ENCODE measurements at regions of chr5 and their contacts with region 1.

Region 1: GRCh38 chr5:180784497-180785097 is 18.0 kb downstream of the MGAT1 start:
- DNase-seq: peak; percentile 85
- H3K4me3 Mint-ChIP-seq: no peak overlapping the region
- H3K27ac Mint-ChIP-seq: no peak overlapping the region
- H3K4me1 Mint-ChIP-seq: peaks cover 16% of the 10 kb centered on the region
- H3K27me3 Mint-ChIP-seq: no peaks in the 10 kb centered on the region
- CTCF ChIP-seq: peak; percentile 68

Region 2: DNA sequence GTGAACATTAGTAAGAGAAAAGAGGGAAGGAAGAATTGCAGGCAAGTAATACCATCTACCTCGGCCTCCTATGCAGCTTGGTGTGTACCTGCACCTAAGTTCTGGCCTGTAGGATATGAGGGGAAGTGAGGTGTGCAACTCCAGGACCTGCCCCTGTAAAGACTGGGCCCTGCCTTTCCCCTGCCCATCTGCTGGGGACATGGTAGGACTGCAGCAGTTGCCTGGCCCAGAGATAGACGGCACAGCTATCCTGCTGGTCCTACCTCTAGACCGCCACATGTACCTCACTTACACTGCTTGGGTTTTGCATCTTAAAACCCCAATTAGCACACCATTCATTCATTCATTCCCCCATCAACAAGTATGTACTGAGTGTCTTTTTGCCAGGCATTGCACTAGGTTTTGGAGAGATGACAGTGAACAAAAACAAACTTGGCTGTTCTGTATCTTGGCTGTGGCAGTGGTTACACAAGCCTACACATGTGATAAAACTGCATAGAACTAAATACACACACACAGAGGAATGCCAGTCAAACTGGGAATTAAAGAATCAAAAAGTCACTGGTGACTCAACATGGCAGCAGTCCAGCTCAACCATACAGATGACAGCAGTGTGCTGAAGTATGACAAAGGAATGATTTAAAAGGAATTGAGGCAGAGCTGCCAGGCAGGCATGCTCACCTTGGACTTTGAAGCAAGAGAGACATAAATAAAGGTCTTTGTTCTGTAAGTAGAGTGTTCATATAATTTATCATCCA is 41.4 kb after region 1 on chr5:
- CTCF ChIA-PET with region 1: no interaction called
- intact Hi-C with region 1: loop called (anchors 2 kb)
- DNase-seq: peak; percentile 85
- H3K4me3 Mint-ChIP-seq: peak overlapping the region; percentile 0
- H3K27ac Mint-ChIP-seq: peak overlapping the region; percentile 30
- H3K4me1 Mint-ChIP-seq: peaks cover 40% of the 10 kb centered on the region
- H3K27me3 Mint-ChIP-seq: no peaks in the 10 kb centered on the region
- CTCF ChIP-seq: no peak

Region 3: DNA sequence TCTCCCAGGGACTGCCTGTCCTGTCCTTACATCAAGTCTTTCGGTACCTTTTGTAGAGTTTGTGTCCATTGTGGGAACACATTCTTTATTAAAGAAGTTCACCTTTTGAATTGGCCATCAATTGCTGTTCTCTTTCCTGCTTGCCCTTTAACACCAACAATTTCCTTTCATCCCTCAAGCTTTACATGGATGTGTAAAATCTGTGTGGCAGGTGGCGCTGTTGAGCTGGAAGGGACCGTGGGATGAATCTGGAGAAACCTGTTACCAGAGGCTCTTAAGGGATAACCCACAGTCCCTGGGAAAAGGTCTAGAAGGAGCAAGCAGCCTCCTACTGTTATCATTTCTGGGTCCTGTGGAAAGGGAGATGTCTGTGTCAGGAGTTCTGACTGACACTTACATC is 84.4 kb after region 1 on chr5:
- CTCF ChIA-PET with region 1: interaction called, 6 read pairs
- intact Hi-C with region 1: loop called (anchors 1 kb)
- DNase-seq: peak; percentile 92
- H3K4me3 Mint-ChIP-seq: no peak overlapping the region
- H3K27ac Mint-ChIP-seq: no peak overlapping the region
- H3K4me1 Mint-ChIP-seq: peaks cover 38% of the 10 kb centered on the region
- H3K27me3 Mint-ChIP-seq: no peaks in the 10 kb centered on the region
- CTCF ChIP-seq: peak; percentile 83

Region 4: GRCh38 chr5:181114844-181115778 is 330.5 kb after region 1 on chr5:
- CTCF ChIA-PET with region 1: no interaction called
- intact Hi-C with region 1: loop called (anchors 5 kb)
- DNase-seq: peak; percentile 45
- H3K4me3 Mint-ChIP-seq: peak overlapping the region; percentile 56
- H3K27ac Mint-ChIP-seq: no peak overlapping the region
- H3K4me1 Mint-ChIP-seq: peaks cover 12% of the 10 kb centered on the region
- H3K27me3 Mint-ChIP-seq: peaks cover 97% of the 10 kb centered on the region
- CTCF ChIP-seq: no peak

Measured in Calu3 (cell line).